Aorta (tissue), 5 donors: ENCODE measurements at regions of chr10 and their contacts with region 1.

Region 1: GRCh38 chr10:27223964-27224363 is 16.6 kb downstream of the ACBD5 start:
- DNase-seq: no peak
- ATAC-seq: no peak
- H3K4me3 ChIP-seq: no peak overlapping the region
- H3K27ac ChIP-seq: no peak overlapping the region
- H3K4me1 ChIP-seq: no peaks in the 10 kb centered on the region
- H3K27me3 ChIP-seq: no peaks in the 10 kb centered on the region

Region 2: DNA sequence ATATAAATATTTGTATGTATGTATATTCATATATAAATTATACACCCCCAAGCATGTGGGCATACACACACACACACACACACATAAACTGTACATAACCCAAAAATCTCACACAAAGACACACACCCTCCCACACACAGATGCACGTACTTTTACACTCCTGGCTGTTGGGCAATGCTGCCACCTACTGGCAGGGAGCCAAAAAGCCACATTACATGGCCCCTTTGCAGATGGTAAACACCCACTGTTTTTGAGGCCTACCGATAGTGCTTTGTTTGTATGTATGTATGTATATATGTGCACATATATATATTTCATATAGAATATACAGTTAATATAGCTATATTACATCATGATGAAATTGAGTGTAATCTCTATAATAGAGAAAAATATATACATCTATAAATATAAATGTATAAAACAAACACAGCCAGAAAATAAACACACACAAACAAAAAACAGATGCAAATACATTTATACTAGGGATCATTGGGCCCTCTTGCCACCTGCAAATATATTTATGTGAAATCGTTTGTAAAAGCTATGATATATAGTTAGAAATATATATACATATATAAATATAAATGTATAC is 136.7 kb after region 1 on chr10:
- intact Hi-C with region 1: loop called in 1 of 2 experiments (anchors 5 kb)
- DNase-seq: peak; percentile 75 to 82
- ATAC-seq: no peak
- H3K4me3 ChIP-seq: no peak overlapping the region
- H3K27ac ChIP-seq: no peak overlapping the region
- H3K4me1 ChIP-seq: no peaks in the 10 kb centered on the region
- H3K27me3 ChIP-seq: no peaks in the 10 kb centered on the region